ENCODE measurements at regions of chr10 and their contacts with region 1.

Region 1: GRCh38 chr10:6445501-6446316 is 134.4 kb downstream of the PRKCQ start:
- DNase-seq: peak; percentile 27 to 58
- H3K4me3 ChIP-seq: no peak overlapping the region
- H3K4me1 ChIP-seq: no peaks in the 10 kb centered on the region
- H3K27me3 ChIP-seq: no peaks in the 10 kb centered on the region

Region 2: GRCh38 chr10:6185039-6185716 is 260.5 kb before region 1 on chr10:
- in situ Hi-C with region 1: no loop called
- DNase-seq: no peak
- H3K4me3 ChIP-seq: no peak overlapping the region
- H3K4me1 ChIP-seq: no peaks in the 10 kb centered on the region
- H3K27me3 ChIP-seq: no peaks in the 10 kb centered on the region

Region 3: GRCh38 chr10:6667679-6668270 is 222.1 kb after region 1 on chr10:
- in situ Hi-C with region 1: loop called (anchors 25 kb)
- DNase-seq: peak; percentile 59 to 68
- H3K4me3 ChIP-seq: no peak overlapping the region
- H3K4me1 ChIP-seq: peaks cover 9% of the 10 kb centered on the region
- H3K27me3 ChIP-seq: peaks cover 19% of the 10 kb centered on the region

Measured in HAP-1 (cell line).